Tibial artery (tissue), 4 donors: ENCODE measurements at regions of chr16 and their contacts with region 1.

Region 1: DNA sequence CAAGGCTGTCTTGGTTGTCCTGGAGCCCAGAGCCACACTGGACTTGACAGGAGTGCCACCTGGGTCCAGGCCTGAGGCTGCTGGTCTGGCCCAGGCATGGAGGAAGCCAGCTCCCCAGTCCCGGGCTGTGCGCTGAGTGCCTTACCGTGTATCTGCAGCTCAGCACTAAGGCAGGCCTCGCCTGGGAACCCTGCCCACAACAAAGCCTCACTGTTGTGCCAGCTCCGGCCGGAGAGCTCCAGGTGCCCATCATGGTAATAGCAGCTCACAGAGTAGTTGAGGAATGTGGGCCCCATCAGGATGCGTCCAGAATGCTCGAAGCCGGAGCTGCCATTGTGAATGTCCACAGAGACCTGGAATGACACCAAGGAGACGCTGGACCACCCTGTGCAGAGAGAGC is 72.2 kb downstream of the RMI2 start:
- DNase-seq: no peak
- H3K4me3 ChIP-seq: no peak overlapping the region
- H3K27ac ChIP-seq: no peak overlapping the region
- H3K4me1 ChIP-seq: no peaks in the 10 kb centered on the region
- H3K27me3 ChIP-seq: no peaks in the 10 kb centered on the region
- CTCF ChIP-seq: no peak

Region 2: DNA sequence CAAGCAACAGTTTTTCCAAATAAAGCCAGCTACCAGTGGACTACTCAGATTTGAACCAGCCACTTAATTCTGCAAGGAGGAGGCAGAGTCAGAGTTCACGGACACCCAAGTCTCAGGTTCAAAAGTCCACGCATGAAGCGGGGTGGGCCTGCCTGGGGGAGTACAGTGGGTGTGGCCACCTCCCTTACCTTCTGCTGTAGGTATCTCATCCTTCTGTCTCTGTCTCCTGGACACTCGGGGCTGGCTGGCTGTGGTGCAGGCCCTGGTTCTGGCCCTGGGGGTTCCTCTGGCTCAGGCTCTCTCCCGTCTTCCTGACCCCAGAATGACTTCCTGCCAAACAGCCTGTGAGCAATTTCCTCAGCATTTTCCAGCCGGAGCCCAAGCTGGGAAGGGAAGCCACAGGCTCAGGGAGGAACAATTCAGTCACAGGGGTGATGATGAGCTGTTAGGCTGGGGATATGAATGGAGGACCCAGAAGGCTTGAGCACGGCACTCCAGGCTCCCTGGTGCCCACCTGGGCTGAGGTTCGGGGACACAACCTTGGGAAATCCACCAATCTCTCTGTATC is 67.3 kb after region 1 on chr16:
- intact Hi-C with region 1: loop called (anchors 5 kb)
- DNase-seq: no peak
- H3K4me3 ChIP-seq: no peak overlapping the region
- H3K27ac ChIP-seq: no peak overlapping the region
- H3K4me1 ChIP-seq: no peaks in the 10 kb centered on the region
- H3K27me3 ChIP-seq: no peaks in the 10 kb centered on the region
- CTCF ChIP-seq: no peak